Activated CD4-positive, alpha-beta T cell treated with anti-CD3 and anti-CD28 coated beads, Interleukin-2, amount 10 ng/mL, durations not matched to agents 24 days and 14 days (primary cell): ENCODE measurements at regions of chr14 and their contacts with region 1.

Region 1: GRCh38 chr14:30355431-30355913 is 203.5 kb upstream of the G2E3 start:
- DNase-seq: peak; percentile 61
- H3K4me3 Mint-ChIP-seq: peak overlapping the region; percentile 5
- H3K27ac Mint-ChIP-seq: peak overlapping the region; percentile 83
- H3K4me1 Mint-ChIP-seq: peaks cover 23% of the 10 kb centered on the region
- H3K27me3 Mint-ChIP-seq: no peaks in the 10 kb centered on the region

Region 2: DNA sequence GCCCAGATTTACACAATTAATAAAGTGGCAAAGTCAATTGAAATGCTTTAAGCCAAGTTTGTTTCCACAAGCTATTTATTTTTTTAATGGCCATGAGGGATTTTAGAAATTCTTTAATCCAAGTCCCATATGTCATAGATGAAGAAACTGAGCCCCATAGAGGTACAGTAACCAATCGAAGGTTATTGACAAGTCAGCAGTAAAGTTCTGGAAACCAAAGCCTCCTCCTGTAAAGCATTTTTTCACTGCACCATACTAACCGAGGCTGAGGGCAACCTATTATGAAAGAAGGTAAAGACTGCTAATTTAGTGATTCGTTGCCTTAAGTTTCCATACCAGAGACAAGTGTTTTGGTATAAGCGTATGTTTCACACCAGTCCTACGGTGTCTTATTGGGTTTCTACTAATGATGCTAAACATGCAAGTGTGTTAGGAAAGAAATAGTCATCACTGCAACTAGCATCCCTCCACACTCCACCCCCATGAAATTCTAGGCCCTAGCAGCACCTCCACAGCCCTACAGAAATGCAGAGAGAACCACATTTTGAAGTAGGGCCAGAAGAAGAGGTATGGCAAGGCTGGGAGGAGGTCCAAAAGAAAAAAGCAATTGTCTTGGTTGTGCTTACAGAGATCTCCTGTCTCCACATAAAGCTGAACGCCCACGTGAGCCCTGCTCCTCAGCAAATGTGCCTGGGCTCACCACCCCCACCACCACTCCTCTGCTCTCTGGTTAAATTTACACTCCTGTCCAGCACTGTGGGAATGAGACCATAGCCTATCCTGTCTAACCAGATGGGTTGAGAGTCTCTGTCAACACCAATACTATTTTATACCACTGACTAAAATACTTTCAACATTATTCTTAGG is 67.7 kb before region 1 on chr14:
- intact Hi-C with region 1: loop called (anchors 2 kb)
- DNase-seq: no peak
- H3K4me3 Mint-ChIP-seq: no peak overlapping the region
- H3K27ac Mint-ChIP-seq: peak overlapping the region; percentile 60
- H3K4me1 Mint-ChIP-seq: no peaks in the 10 kb centered on the region
- H3K27me3 Mint-ChIP-seq: no peaks in the 10 kb centered on the region

Region 3: DNA sequence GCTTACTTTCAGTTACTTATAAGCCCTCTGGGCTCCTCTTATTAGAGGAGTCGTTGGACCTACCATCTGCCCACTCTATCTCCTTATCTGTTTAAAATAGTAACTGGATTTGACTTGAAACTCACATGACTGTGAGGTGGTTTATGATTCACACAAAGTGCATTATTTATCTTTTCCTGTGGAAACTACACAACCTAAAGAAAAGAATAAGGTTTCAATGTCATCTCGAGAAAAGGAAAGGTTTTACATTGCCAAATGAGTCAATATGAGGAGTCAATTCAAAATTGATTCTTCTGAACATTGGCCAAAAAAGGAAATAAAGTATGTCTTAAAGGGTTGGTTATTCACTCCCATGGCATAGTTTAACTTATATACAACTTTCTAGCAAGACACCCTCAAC is 21.5 kb before region 1 on chr14:
- intact Hi-C with region 1: loop called (anchors 1 kb)
- DNase-seq: no peak
- H3K4me3 Mint-ChIP-seq: peak overlapping the region; percentile 9
- H3K27ac Mint-ChIP-seq: peak overlapping the region; percentile 74
- H3K4me1 Mint-ChIP-seq: peaks cover 16% of the 10 kb centered on the region
- H3K27me3 Mint-ChIP-seq: no peaks in the 10 kb centered on the region

Region 4: DNA sequence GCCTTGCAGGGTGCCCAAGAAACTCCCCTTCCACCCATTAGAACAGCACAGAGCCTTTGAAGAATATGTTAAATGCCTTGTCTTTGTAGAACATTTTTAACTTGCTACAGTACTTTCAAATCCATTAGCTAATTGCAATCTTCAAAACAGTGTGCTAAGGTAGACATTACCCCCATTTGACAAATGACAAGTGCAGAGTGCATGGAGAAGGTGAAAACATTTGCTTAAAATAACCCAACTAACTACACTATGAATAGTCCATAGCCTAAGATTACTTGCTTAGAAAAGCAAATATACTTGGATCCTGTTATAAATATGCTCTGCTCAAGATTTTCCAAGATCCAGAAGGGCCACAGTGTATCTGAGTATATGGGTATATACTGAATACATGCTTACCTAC is 116.5 kb after region 1 on chr14:
- intact Hi-C with region 1: no loop called
- DNase-seq: no peak
- H3K4me3 Mint-ChIP-seq: no peak overlapping the region
- H3K27ac Mint-ChIP-seq: no peak overlapping the region
- H3K4me1 Mint-ChIP-seq: no peaks in the 10 kb centered on the region
- H3K27me3 Mint-ChIP-seq: no peaks in the 10 kb centered on the region